Naive thymus-derived CD4-positive, alpha-beta T cell (primary cell): ENCODE measurements at regions of chr11 and their contacts with region 1.

Region 1: DNA sequence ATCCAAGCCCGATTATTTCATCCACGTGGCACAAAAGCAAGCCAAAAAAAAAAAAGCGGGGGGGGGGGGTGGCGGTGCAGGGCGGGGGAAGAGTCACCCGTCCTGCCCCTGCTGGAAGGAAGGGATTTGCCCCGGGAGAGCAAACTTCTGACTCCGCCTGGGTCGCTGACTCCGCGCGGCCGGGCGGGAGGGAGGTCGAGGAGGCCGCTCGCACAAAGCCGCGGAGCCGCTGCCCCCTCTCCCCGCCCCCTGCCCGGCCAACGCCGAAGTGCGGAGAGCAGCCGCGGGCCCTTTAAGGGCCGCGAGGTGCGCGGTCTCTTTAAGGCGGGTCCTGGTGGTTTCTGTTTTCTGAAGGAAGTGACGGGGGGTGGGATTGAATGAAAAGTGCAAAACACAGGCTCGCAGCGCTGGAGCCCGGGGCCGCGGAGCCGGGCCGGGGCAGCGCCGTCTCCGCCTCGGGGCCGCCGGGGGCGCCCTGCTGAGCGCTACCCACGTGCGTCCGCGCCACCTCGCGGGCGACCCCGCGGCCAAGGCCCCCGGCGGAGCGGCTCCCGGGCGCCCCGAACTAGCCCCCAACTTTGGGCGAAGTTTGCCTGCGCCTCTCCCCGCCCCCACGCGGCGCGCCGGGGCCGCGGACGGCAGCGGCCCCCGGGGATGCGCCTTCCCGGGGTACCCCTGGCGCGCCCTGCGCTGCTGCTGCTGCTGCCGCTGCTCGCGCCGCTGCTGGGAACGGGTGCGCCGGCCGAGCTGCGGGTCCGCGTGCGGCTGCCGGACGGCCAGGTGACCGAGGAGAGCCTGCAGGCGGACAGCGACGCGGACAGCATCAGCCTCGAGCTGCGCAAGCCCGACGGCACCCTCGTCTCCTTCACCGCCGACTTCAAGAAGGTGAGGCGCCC is at the start of gene OAF:
- DNase-seq: peak; percentile 49 to 77 (median 69)
- ATAC-seq: peak; percentile 85
- H3K4me3 ChIP-seq: peak within 1 kb of the TSS; percentile 80
- H3K4me3 Mint-ChIP-seq: peak within 1 kb of the TSS; percentile 93 to 99 (median 96)
- H3K27ac ChIP-seq: peak within 1 kb of the TSS; percentile 46
- H3K27ac Mint-ChIP-seq: peak within 1 kb of the TSS; percentile 83 to 96 (median 86)
- H3K4me1 ChIP-seq: peaks cover 0 to 8% of the 10 kb centered on the region in 2 donors
- H3K4me1 Mint-ChIP-seq: peaks cover 11 to 27% (median 18%) of the 10 kb centered on the region in 7 donors
- H3K27me3 ChIP-seq: no peaks in the 10 kb centered on the region
- H3K27me3 Mint-ChIP-seq: peaks cover 0 to 70% (median 13%) of the 10 kb centered on the region in 5 donors
- total RNA-seq, gene OAF: 3.4 to 21.2 (median 4.6) TPM

Region 2: DNA sequence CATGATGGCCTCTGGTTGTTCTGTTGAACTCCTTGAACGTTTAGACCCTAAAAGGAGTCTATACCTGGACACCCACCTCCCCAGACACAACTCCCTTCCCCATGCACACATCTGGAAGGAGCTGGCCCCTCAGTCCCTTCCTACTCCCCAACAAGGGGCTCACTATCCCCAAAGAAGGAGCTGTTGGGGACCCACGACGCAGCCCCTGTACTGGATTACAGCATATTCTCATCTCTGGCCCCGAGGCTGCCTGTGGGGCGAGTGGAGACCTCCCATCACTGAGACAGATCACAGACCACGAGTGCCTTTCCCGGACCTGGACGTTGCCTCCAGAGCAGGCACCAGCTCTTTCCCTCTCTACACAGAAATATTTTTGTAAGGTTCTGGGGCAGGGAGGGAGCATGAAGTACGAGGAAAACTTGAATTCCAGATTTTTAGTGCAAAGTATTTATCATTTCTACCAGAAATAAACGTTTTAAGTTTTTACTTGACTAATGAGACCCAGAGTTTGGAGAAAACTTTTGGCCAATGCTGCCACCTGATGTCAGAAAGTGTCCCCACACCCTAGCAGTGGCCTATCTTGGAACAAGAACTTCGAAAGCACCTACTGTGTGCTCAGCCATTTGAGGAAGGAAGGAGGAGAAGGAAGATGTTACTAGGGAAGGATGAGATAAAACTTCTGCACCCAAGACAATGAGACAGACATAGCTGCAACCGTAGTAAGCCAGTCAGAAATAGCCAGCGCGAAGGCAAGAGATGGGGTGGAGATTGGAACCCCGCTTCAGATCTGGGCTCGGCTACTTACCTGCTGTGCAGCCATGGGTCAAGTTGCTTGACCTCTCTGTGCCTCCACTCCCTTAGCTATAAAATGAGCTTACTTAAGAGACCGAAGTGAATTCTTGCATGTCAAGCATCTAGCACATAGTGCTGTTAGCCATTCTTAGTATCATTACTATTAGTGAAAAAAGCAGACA is 18.9 kb after region 1 on chr11:
- CTCF ChIA-PET with region 1: no interaction called
- POLR2A ChIA-PET with region 1: no interaction called
- intact Hi-C with region 1: loop called in 1 of 2 experiments (anchors 2 kb)
- DNase-seq: peak in 3 of 9 donors; percentile 9 to 18 (median 17)
- ATAC-seq: peak; percentile 33
- H3K4me3 ChIP-seq: no peak overlapping the region
- H3K4me3 Mint-ChIP-seq: no peak overlapping the region
- H3K27ac ChIP-seq: no peak overlapping the region
- H3K27ac Mint-ChIP-seq: no peak overlapping the region
- H3K4me1 ChIP-seq: no peaks in the 10 kb centered on the region
- H3K4me1 Mint-ChIP-seq: peaks cover 0 to 8% (median 3%) of the 10 kb centered on the region in 7 donors
- H3K27me3 ChIP-seq: peaks cover 0 to 3% of the 10 kb centered on the region in 2 donors
- H3K27me3 Mint-ChIP-seq: peaks cover 3 to 26% (median 11%) of the 10 kb centered on the region in 5 donors

Region 3: GRCh38 chr11:120248551-120249278 is 37.8 kb after region 1 on chr11:
- CTCF ChIA-PET with region 1: no interaction called
- POLR2A ChIA-PET with region 1: no interaction called
- intact Hi-C with region 1: loop called in 1 of 2 experiments (anchors 1 kb)
- DNase-seq: peak in 1 of 9 donors; percentile 32
- ATAC-seq: no peak
- H3K4me3 ChIP-seq: no peak overlapping the region
- H3K4me3 Mint-ChIP-seq: peak overlapping the region in 1 of 10 donors; percentile 79
- H3K27ac ChIP-seq: no peak overlapping the region
- H3K27ac Mint-ChIP-seq: peak overlapping the region in 1 of 9 donors; percentile 78
- H3K4me1 ChIP-seq: no peaks in the 10 kb centered on the region
- H3K4me1 Mint-ChIP-seq: peaks cover 0 to 57% (median 0%) of the 10 kb centered on the region in 7 donors
- H3K27me3 ChIP-seq: no peaks in the 10 kb centered on the region
- H3K27me3 Mint-ChIP-seq: peaks cover 30 to 72% (median 44%) of the 10 kb centered on the region in 5 donors